Heart right ventricle (tissue), 16 donors: ENCODE measurements at regions of chr7 and their contacts with region 1.

Region 1: DNA sequence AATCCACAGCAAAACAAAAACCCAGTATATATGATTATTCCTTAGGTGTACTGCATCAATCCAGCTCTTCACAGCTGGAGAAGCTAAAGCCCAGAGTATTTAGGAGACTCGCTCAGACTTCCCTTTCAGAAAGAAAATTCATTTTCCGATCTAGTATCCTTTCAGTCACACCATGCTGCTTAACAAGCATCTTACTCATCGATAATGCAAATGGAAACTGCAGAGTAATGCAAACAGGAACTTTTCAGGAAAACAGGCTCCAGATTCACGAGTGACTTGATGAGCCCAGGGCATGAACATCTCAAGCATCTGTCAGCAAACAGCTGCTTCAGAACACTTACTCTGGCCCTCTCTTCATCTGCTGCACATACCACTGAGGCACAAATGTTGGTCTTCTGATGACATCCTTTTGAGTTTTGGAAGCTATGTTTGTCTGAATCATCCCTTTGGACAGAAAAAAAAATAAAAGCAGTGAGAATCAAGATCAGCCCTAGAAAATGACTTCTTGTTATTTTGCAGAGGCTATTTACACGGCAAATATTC is 24.9 kb upstream of the ZC3HAV1L start:
- DNase-seq: no peak
- ATAC-seq: no peak
- H3K4me3 ChIP-seq: no peak overlapping the region
- H3K27ac ChIP-seq: peak overlapping the region in 8 of 10 donors; percentile 18 to 93 (median 82)
- H3K4me1 ChIP-seq: peaks cover 0 to 37% (median 22%) of the 10 kb centered on the region in 9 donors
- H3K27me3 ChIP-seq: no peaks in the 10 kb centered on the region
- CTCF ChIP-seq: no peak

Region 2: GRCh38 chr7:139023076-139023475 is 37.7 kb before region 1 on chr7:
- intact Hi-C with region 1: loop called in 1 of 10 experiments (anchors 5 kb)
- DNase-seq: no peak
- ATAC-seq: no peak
- H3K4me3 ChIP-seq: no peak overlapping the region
- H3K27ac ChIP-seq: no peak overlapping the region
- H3K4me1 ChIP-seq: no peaks in the 10 kb centered on the region
- H3K27me3 ChIP-seq: no peaks in the 10 kb centered on the region
- CTCF ChIP-seq: no peak